T-cell (primary cell): ENCODE measurements at regions of chr11 and their contacts with region 1.

Region 1: GRCh38 chr11:10455637-10456487 is 798 bp downstream of the AMPD3 start:
- DNase-seq: peak; percentile 46 to 84 (median 69)
- ATAC-seq: peak; percentile 67 to 80 (median 78)
- H3K4me3 ChIP-seq: peak overlapping the region; percentile 49 to 86
- H3K4me3 Mint-ChIP-seq: peak overlapping the region; percentile 84 to 90 (median 84)
- H3K27ac ChIP-seq: peak overlapping the region; percentile 86
- H3K27ac Mint-ChIP-seq: peak overlapping the region; percentile 94 to 98
- H3K4me1 ChIP-seq: peaks cover 45 to 69% of the 10 kb centered on the region in 2 experiments
- H3K4me1 Mint-ChIP-seq: peaks cover 81 to 91% (median 85%) of the 10 kb centered on the region in 3 donors
- H3K27me3 ChIP-seq: no peaks in the 10 kb centered on the region
- H3K27me3 Mint-ChIP-seq: no peaks in the 10 kb centered on the region

Region 2: GRCh38 chr11:10413268-10413667 is 42.6 kb before region 1 on chr11:
- CTCF ChIA-PET with region 1: interaction called, 3 to 10 read pairs
- POLR2A ChIA-PET with region 1: no interaction called
- DNase-seq: peak in 33 of 35 experiments; percentile 14 to 73 (median 36)
- ATAC-seq: peak; percentile 78 to 86 (median 80)
- H3K4me3 ChIP-seq: no peak overlapping the region
- H3K4me3 Mint-ChIP-seq: no peak overlapping the region
- H3K27ac ChIP-seq: no peak overlapping the region
- H3K27ac Mint-ChIP-seq: no peak overlapping the region
- H3K4me1 ChIP-seq: peaks cover 15 to 32% of the 10 kb centered on the region in 2 experiments
- H3K4me1 Mint-ChIP-seq: peaks cover 36 to 48% (median 47%) of the 10 kb centered on the region in 3 donors
- H3K27me3 ChIP-seq: no peaks in the 10 kb centered on the region
- H3K27me3 Mint-ChIP-seq: no peaks in the 10 kb centered on the region

Region 3: DNA sequence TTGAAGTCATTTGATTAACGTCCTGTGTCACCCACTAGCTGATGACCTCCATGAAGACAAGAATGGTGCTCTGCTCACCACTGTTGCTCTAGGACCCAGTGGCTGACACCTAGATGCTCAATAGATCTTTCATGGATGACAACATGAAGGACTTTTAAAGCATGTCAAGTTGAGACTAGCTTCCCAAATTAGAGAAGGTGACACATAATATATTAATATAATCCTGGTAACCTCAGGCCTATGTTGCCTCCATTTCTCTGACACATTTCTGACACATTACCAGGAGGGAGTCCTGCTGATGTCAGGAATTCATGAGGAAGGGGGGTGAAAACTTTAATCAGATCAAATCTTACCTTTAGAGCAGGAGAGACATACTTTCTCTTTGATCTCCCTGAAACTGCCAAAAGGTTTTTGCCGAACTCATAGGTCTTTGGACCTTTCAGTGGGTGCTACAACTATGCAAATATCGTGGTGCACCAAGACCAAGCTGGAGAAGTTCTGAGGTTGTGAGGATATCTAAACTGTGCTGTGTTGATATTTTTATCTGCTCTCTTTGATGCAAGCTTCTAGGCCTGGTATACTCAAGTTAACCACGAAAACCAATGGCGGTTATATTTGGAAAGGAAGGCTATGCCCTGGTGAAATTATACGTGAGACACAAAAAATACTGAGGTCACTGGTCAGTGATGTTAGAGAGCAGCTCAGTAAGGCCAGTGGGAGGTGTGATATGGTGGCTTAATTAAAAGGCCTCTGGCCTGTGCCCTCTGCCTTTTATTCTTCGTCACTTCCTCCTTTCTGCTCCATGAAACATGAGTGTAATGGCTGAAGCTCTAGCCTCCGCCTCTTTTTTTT is 14.0 kb before region 1 on chr11:
- CTCF ChIA-PET with region 1: interaction called in 1 of 2 experiments, 11 read pairs
- POLR2A ChIA-PET with region 1: interaction called in 1 of 2 experiments, 3 read pairs
- DNase-seq: peak in 1 of 35 experiments; percentile 38
- ATAC-seq: peak in 3 of 4 experiments; percentile 58 to 78 (median 65)
- H3K4me3 ChIP-seq: no peak overlapping the region
- H3K4me3 Mint-ChIP-seq: peak overlapping the region in 1 of 3 donors; percentile 15
- H3K27ac ChIP-seq: peak overlapping the region; percentile 1
- H3K27ac Mint-ChIP-seq: peak overlapping the region; percentile 66 to 71
- H3K4me1 ChIP-seq: peaks cover 13 to 24% of the 10 kb centered on the region in 2 experiments
- H3K4me1 Mint-ChIP-seq: peaks cover 21 to 33% (median 23%) of the 10 kb centered on the region in 3 donors
- H3K27me3 ChIP-seq: no peaks in the 10 kb centered on the region
- H3K27me3 Mint-ChIP-seq: no peaks in the 10 kb centered on the region

Region 4: DNA sequence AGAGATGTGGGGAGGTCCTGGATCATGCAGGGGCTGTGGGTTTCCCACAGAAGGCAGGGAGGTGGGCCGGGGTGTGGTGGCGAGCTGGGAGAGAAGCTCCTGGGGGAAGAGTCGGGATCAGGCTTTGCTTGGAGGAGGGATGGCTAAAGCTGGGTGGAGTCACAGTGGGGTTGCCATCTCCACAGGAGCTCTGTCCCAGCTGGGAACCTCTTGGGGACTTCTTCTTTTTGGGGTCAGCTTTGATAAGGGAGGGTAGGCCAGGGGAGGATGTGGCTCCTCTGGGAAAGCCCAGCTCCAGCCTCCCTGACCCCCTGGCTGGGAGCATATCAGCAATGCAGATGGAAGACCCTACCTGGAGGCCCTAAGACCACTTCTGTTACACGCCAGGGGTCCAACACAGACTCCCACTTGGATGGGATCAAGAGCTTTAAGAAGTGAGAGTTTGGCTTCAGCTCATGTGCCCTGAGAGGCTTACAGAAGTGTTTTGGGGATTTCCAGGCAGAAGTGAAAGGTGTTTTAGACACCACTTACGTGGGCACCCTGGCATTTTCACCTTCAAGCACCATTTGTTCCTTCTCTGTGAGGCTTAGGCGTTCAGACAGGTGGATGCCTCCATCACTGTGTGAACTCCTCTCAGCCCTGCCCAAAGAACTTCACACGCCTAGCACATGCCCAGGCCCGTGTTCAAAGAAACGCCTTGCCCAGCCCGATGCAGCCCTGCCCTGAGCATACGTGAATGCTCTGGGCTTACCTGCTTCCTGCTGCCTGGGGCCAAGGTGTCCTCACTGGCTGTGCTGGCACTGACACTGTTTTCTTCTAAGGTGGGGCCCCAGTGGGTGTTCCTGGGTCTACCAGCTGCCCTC is 33.0 kb after region 1 on chr11:
- CTCF ChIA-PET with region 1: no interaction called
- POLR2A ChIA-PET with region 1: interaction called in 1 of 2 experiments, 11 read pairs
- DNase-seq: peak in 6 of 35 experiments; percentile 7 to 45 (median 15)
- ATAC-seq: peak in 1 of 4 experiments; percentile 67
- H3K4me3 ChIP-seq: no peak overlapping the region
- H3K4me3 Mint-ChIP-seq: no peak overlapping the region
- H3K27ac ChIP-seq: peak overlapping the region; percentile 24
- H3K27ac Mint-ChIP-seq: peak overlapping the region; percentile 34 to 47
- H3K4me1 ChIP-seq: peaks cover 0 to 8% of the 10 kb centered on the region in 2 experiments
- H3K4me1 Mint-ChIP-seq: peaks cover 10 to 16% (median 11%) of the 10 kb centered on the region in 3 donors
- H3K27me3 ChIP-seq: no peaks in the 10 kb centered on the region
- H3K27me3 Mint-ChIP-seq: no peaks in the 10 kb centered on the region

Region 5: GRCh38 chr11:10540923-10541560 is 85.2 kb after region 1 on chr11 and contains the start of gene RNF141:
- CTCF ChIA-PET with region 1: interaction called, 3 to 11 read pairs
- POLR2A ChIA-PET with region 1: interaction called in 1 of 2 experiments, 4 read pairs
- DNase-seq: peak; percentile 81 to 98 (median 92)
- ATAC-seq: peak; percentile 97 to 99 (median 98)
- H3K4me3 ChIP-seq: peak within 1 kb of the TSS; percentile 82 to 86
- H3K4me3 Mint-ChIP-seq: peak within 1 kb of the TSS; percentile 87 to 91 (median 87)
- H3K27ac ChIP-seq: peak within 1 kb of the TSS; percentile 78
- H3K27ac Mint-ChIP-seq: peak within 1 kb of the TSS; percentile 75 to 86
- H3K4me1 ChIP-seq: peaks cover 2 to 12% of the 10 kb centered on the region in 2 experiments
- H3K4me1 Mint-ChIP-seq: peaks cover 22 to 37% (median 30%) of the 10 kb centered on the region in 3 donors
- H3K27me3 ChIP-seq: peaks cover 0 to 13% of the 10 kb centered on the region in 2 experiments
- H3K27me3 Mint-ChIP-seq: no peaks in the 10 kb centered on the region
- total RNA-seq, gene RNF141: 15.1 to 17.3 (median 15.3) TPM